Activated CD4-positive, alpha-beta T cell treated with anti-CD3 and anti-CD28 coated beads for 36 hours (primary cell): ENCODE measurements at regions of chr9 and their contacts with region 1.

Region 1: GRCh38 chr9:37753489-37754190 is at the start of gene TRMT10B:
- DNase-seq: peak; percentile 88
- ATAC-seq: peak; percentile 94
- H3K4me3 Mint-ChIP-seq: peak within 1 kb of the TSS; percentile 91
- H3K27ac Mint-ChIP-seq: peak within 1 kb of the TSS; percentile 92
- H3K4me1 Mint-ChIP-seq: peaks cover 32% of the 10 kb centered on the region
- H3K27me3 Mint-ChIP-seq: no peaks in the 10 kb centered on the region
- total RNA-seq, gene TRMT10B: 12.3 to 15.6 TPM

Region 2: GRCh38 chr9:37800631-37801286 is 47.1 kb after region 1 on chr9 and contains the start of gene DCAF10:
- CTCF ChIA-PET with region 1: interaction called, 5 read pairs
- POLR2A ChIA-PET with region 1: no interaction called
- intact Hi-C with region 1: loop called (anchors 1 to 5 kb)
- DNase-seq: peak; percentile 92
- ATAC-seq: peak; percentile 78
- H3K4me3 Mint-ChIP-seq: peak within 1 kb of the TSS; percentile 90
- H3K27ac Mint-ChIP-seq: peak within 1 kb of the TSS; percentile 89
- H3K4me1 Mint-ChIP-seq: peaks cover 35% of the 10 kb centered on the region
- H3K27me3 Mint-ChIP-seq: no peaks in the 10 kb centered on the region
- total RNA-seq, gene DCAF10: 13.9 to 15.4 TPM